ENCODE measurements at regions of chr19 and their contacts with region 1.

Region 1: DNA sequence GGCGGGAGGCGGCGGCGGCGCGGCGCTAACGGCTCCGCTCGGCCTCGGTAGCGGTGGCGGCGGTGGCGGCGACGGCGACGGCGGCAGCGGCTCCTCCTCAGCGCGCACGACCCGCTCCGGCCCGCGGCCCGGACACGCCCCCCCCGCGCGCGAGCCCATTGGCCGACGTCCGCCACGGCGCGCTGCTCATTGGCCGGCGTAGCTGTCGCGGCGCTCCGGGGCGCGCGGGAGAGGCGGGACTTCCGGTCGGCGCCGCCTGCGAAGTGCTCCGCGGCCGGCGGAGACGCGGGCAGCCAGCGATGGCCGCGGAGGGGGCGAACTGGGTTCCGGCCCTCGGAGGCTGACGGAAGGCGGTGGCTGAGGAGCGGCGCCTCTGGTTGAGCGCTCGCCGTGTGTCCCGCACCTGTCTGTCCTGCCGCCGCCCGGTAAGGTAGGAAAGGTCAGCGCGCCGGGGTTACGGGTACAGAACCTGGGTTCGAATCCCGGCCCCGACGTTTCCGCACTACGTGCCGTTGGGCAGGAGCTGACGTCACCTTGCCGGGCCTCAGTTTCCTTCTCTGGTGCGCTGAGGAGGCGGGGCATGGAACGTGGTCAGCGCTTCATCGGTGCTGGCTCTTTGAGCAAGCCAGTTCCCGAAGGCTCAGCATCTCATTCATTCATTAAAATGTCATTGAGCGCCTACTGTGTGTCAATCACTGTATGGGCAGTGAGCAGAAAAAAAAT is at the start of gene ELAVL1:
- DNase-seq: peak; percentile 78 to 98 (median 86)

Region 2: DNA sequence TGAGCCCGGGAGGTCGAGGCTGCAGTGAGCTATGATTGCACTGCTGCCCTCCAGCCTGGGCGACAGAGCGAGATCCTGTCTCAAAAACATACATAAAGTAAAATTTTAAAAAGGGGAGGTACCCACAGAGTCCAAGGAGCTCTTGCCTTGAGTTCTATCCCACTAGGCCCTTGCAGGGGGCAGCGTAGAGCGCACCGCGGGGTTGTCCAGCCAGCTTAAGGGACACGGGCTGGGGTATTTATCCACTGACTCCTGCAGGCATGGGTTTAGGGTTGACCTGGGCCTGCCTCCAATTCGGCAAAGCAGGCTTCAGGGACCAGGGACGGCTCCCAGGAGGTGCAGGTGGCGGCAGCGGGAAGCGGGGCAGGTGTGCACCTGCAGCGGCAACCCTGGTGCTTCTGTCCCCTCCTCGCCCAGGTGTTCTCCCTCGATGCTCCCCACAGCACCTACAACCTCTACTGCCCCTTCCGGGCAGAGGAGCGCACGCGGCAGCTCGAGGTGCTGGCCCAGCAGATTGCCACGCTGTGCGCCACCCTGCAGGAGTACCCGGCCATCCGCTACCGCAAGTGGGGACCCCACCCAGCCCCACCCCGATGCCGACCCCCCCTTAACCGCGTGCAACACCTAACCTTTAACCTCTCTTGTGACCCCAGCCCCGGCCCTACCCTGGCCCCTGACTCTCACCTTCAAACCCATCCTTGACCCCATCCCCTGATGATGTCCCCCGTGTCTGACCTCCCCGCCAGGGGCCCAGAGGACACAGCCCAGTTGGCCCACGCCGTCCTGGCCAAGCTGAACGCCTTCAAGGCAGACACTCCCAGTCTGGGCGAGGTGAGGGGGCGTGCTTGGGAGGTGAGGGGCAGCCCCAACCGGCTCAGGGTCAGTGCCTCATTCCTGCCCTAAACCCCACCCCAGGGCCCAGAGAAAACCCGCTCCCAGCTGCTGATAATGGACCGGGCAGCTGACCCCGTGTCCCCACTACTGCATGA is 364.1 kb before region 1 on chr19:
- intact Hi-C with region 1: no loop called
- DNase-seq: no peak

Region 3: GRCh38 chr19:7943444-7944176 is 62.1 kb before region 1 on chr19 and contains the start of gene TIMM44:
- intact Hi-C with region 1: loop called (anchors 1 kb)
- DNase-seq: peak; percentile 98 to 100 (median 100)

Region 4: GRCh38 chr19:7955696-7956095 is 50.0 kb before region 1 on chr19:
- intact Hi-C with region 1: no loop called
- DNase-seq: peak in 1 of 10 donors; percentile 53

Region 5: GRCh38 chr19:7970716-7971448 is 34.8 kb before region 1 on chr19:
- intact Hi-C with region 1: loop called (anchors 5 kb)
- DNase-seq: peak in 8 of 10 donors; percentile 30 to 93 (median 50)

Measured in posterior cingulate gyrus (tissue), 11 donors.